ENCODE measurements at regions of chr7 and their contacts with region 1.

Region 1: GRCh38 chr7:26365077-26365900 is 73.6 kb downstream of the SNX10 start:
- DNase-seq: peak; percentile 57 to 74
- H3K4me3 ChIP-seq: no peak overlapping the region
- H3K27ac ChIP-seq: no peak overlapping the region
- H3K4me1 ChIP-seq: no peaks in the 10 kb centered on the region
- H3K27me3 ChIP-seq: no peaks in the 10 kb centered on the region
- CTCF ChIP-seq: peak; percentile 97

Region 2: GRCh38 chr7:25389489-25390106 is 975.7 kb before region 1 on chr7:
- CTCF ChIA-PET with region 1: no interaction called
- POLR2A ChIA-PET with region 1: no interaction called
- intact Hi-C with region 1: loop called (anchors 10 kb)
- DNase-seq: peak in 1 of 2 experiments; percentile 48
- H3K4me3 ChIP-seq: no peak overlapping the region
- H3K27ac ChIP-seq: no peak overlapping the region
- H3K4me1 ChIP-seq: no peaks in the 10 kb centered on the region
- H3K27me3 ChIP-seq: peaks cover 78% of the 10 kb centered on the region
- CTCF ChIP-seq: peak; percentile 69

Region 3: DNA sequence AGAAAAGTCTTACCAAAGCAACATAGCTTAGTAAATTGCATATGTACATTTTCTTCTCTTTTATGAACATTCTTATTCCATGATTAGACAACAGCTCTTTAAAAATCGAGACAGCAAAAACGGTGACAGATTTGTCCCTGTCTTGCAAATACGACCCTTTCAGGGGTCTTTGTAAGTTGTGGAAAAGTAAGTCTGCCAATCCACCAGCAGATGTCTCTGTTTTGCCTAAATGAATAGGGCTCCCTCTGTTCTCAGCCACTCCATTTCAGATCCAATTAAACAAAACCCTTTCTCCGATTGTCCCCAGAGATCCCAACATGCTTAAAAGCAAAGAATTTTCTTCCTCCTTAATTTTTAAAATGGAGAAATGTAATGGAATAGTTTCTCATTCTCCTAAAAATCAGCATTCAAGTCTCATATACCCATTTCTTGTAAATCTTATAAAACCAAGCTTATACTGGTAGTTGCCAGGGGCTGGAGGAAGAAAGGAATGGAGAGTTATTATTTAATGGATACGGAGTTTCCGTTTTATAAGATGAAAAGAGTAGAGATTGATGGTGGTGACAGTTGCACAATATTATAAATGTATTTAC is 274.3 kb before region 1 on chr7:
- CTCF ChIA-PET with region 1: interaction called, 5 read pairs
- POLR2A ChIA-PET with region 1: no interaction called
- intact Hi-C with region 1: loop called (anchors 1 kb)
- DNase-seq: peak in 1 of 2 experiments; percentile 50
- H3K4me3 ChIP-seq: no peak overlapping the region
- H3K27ac ChIP-seq: no peak overlapping the region
- H3K4me1 ChIP-seq: peaks cover 31% of the 10 kb centered on the region
- H3K27me3 ChIP-seq: no peaks in the 10 kb centered on the region
- CTCF ChIP-seq: peak; percentile 92

Region 4: DNA sequence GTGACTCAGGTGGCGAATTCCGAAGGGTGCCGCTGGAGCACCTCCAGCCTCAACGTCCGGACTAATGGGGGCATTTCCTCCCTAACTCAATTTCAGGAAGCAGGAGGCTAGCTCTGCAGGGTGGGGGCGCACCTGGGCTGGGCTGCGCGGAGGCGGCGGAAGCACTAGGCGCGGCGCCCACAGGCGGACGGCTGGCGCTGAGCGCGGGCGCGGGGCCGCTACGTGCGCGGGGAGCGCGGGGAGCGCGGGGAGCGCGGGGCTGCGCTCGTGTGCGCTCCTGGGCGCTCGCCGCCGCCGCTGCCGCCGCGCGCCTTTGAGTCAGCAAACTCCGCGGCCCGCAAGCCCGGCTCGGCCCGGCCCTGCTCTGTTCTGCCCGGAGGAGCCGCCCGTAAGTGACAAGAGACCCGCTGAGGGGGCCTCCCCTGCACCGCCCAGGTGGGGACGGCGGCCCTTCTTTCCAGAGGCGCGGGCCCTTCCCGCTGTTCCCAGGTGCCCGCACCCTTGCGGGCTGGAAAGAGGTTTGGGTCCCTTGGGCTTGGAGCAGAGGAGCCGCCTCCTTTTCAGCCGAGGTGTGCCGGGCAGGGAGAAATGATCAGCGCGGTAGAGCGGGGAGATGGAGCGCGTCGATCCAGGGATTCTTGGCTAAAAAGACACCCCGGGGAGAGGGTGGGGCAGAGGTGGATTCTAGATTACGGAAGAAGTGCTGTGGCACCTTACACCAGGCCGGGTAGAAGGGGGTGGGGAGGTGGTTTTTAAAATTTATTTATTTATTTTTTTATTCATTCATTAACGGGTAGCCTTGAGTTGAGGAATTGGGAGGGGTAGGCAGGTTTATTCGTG is 73.4 kb before region 1 on chr7 and contains the start of gene SNX10:
- CTCF ChIA-PET with region 1: interaction called, 4 read pairs
- POLR2A ChIA-PET with region 1: no interaction called
- intact Hi-C with region 1: loop called (anchors 2 kb)
- DNase-seq: peak; percentile 59 to 76
- H3K4me3 ChIP-seq: peak within 1 kb of the TSS; percentile 88
- H3K27ac ChIP-seq: no peak within 1 kb of the TSS
- H3K4me1 ChIP-seq: peaks cover 13% of the 10 kb centered on the region
- H3K27me3 ChIP-seq: no peaks in the 10 kb centered on the region
- CTCF ChIP-seq: peak; percentile 61; the same call in 1 of the 2 replicates
- total RNA-seq, gene SNX10: 9.1 and 9.8 TPM in 2 replicates

Region 5: GRCh38 chr7:26633557-26633956 is 268.3 kb after region 1 on chr7:
- CTCF ChIA-PET with region 1: no interaction called
- POLR2A ChIA-PET with region 1: no interaction called
- intact Hi-C with region 1: no loop called
- DNase-seq: peak; percentile 26 to 52
- H3K4me3 ChIP-seq: no peak overlapping the region
- H3K27ac ChIP-seq: no peak overlapping the region
- H3K4me1 ChIP-seq: peaks cover 7% of the 10 kb centered on the region; the same call in 1 of the 2 replicates
- H3K27me3 ChIP-seq: no peaks in the 10 kb centered on the region
- CTCF ChIP-seq: no peak

Region 6: DNA sequence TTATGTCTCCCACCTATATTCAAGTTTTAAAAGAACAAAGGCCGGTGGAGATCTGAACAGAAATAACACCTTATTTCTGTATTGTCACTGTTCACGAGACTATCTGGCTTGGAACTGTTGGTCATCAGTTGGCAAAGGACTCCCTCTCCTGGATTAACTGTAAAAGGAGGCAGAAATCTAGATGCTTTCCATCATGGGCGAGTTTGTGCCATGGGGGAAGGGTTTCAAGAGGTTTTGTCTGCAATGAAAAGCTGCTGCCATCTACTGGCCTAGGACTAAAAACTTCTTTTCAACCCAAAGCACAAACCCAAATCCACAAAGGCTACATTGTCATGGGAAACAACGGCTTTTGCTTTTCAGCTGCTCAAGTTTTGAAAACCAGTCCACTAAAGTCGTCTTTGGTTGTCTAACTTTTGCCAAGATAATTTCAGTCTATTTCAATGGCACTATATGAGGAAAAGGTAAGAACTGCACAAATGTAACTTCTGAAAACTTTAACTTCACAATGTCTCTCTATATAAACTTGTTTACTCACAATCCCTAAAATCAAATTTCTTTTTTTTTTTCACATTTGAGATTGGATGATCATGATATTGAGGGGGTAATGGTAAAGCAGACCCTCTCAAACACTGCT is 302.3 kb after region 1 on chr7:
- CTCF ChIA-PET with region 1: interaction called, 94 read pairs
- POLR2A ChIA-PET with region 1: no interaction called
- intact Hi-C with region 1: loop called (anchors 1 kb)
- DNase-seq: peak; percentile 84 to 94
- H3K4me3 ChIP-seq: no peak overlapping the region
- H3K27ac ChIP-seq: no peak overlapping the region
- H3K4me1 ChIP-seq: peaks cover 61% of the 10 kb centered on the region
- H3K27me3 ChIP-seq: no peaks in the 10 kb centered on the region
- CTCF ChIP-seq: peak; percentile 99

Region 7: DNA sequence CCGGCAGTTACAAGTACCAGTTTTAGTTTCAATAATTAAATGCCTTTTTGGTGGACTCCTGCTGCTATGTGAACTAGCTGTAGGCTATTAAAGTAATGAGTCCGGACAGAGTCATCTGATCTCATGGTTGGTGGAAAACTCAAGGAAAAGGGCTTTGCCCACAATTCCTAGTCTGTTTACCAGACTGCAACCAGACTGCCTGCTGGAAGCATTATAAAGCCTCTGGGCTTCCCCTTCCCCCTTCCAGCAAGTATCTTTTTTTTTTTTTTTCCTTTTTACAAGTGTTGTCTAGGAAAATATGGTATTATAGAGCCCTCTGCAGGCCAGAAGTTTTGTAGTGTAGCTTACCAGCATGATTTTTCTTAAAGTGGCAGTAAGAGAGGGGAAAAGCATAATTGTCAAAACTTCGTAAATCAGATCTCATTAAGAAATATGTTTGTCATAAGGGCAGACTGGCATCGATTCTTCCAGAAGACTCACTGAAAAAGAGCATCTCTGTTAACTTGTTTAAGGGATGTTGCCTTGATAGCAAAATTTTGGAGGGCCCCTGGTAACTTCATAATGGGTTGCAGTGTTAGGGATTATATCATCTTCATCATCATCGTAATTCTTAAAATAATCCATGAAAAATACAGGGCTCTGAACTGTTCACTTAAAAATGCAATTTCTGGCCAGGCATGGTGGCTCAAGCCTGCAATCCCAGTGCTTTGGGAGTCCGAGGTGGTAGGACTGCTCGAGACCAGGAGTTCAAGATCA is 1556.0 kb after region 1 on chr7:
- CTCF ChIA-PET with region 1: no interaction called
- POLR2A ChIA-PET with region 1: no interaction called
- intact Hi-C with region 1: loop called (anchors 5 kb)
- DNase-seq: peak; percentile 66 to 82
- H3K4me3 ChIP-seq: no peak overlapping the region
- H3K27ac ChIP-seq: 0 out of 2 replicates have a peak overlapping the region, but pooled peaks have one; percentile 1
- H3K4me1 ChIP-seq: peaks cover 33% of the 10 kb centered on the region
- H3K27me3 ChIP-seq: no peaks in the 10 kb centered on the region
- CTCF ChIP-seq: peak; percentile 91